OCI-LY7 (cell line): ENCODE measurements at regions of chr1 and their contacts with region 1.

Region 1: DNA sequence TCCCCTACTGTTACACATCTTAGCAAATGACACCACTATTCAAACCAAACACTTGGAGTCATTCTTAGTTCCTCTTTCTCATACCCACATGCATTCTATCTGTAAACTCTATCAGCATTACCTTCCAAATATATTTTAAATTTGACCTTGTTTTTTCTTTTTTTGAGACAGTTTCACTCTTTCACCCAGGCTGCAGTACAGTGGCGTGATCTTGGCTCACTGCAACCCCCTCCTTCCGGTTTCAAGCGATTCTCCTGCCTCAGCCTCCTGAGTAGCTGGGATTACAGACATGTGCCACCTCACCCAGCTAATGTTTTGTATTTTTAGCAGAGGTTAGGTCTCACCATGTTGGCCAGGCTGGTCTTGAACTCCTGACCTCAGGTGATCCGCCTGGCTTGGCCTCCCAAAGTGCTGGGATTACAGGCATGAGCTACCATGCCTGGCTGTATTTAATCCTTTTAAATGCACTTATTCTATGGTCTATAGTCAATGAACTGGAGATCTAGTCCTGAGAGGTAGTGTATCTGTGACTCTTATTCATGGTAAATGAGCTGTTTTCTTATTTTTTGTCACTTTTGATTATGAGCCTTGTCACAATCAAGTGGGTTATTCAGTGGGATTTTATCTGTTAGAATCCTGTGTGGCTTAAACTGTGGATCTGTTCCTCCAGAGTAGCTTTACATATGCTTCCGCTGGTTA is 73.1 kb downstream of the GATAD2B start:
- DNase-seq: peak; percentile 62
- H3K4me3 ChIP-seq: peak overlapping the region; percentile 53
- H3K27ac ChIP-seq: peak overlapping the region; percentile 96
- H3K4me1 ChIP-seq: peaks cover 75% of the 10 kb centered on the region
- CTCF ChIP-seq: no peak

Region 2: GRCh38 chr1:153796791-153797659 is 52.6 kb before region 1 on chr1:
- CTCF ChIA-PET with region 1: no interaction called
- POLR2A ChIA-PET with region 1: no interaction called
- intact Hi-C with region 1: no loop called
- DNase-seq: peak; percentile 88
- H3K4me3 ChIP-seq: no peak overlapping the region
- H3K27ac ChIP-seq: no peak overlapping the region
- H3K4me1 ChIP-seq: peaks cover 5% of the 10 kb centered on the region
- CTCF ChIP-seq: peak; percentile 83

Region 3: DNA sequence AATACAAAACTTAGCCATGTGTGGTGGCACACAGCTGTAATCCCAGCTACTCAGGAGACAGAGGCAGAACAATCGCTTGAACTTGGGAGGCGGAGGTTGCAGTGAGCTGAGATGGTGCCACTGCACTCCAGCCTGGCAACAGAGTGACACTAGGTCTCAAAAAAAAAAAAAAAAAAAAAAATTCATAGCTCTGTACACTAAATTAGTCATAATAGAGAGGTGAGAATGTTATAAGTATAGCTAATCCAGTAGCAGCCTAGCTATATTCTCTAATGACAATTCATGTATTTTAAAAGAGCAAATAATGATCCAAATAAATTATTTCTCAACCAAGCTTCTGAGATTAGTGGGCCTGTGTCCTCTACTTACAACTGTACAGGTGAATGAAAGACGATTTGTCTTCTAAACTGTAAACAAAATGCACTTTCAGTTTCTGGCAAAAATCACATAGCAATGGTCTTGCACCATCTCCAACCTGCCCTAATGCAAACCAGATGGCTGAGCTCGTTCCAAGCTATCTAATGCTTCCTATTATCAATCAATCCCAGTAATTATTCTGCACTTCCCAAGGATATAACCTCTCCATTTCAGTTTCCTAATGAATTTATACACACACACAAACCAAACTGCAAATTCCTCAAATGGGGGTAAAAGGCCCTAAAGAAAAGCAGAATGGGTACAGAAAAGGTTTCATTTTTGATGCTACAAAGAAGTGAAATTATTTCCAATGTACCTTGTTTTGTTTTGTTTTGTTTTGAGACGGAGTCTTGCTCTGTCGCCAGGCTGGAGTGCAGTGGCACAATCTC is 16.6 kb after region 1 on chr1:
- CTCF ChIA-PET with region 1: no interaction called
- POLR2A ChIA-PET with region 1: interaction called, 13 read pairs
- intact Hi-C with region 1: no loop called
- DNase-seq: no peak
- H3K4me3 ChIP-seq: no peak overlapping the region
- H3K27ac ChIP-seq: peak overlapping the region; percentile 3
- H3K4me1 ChIP-seq: peaks cover 10% of the 10 kb centered on the region
- CTCF ChIP-seq: no peak